T-cell (primary cell): ENCODE measurements at regions of chr6 and their contacts with region 1.

Region 1: GRCh38 chr6:27893059-27893835 is 18.9 kb downstream of the OR2B2 start:
- DNase-seq: peak; percentile 71 to 93 (median 86)
- ATAC-seq: peak; percentile 72 to 79 (median 76)
- H3K4me3 ChIP-seq: peak overlapping the region; percentile 71 to 76
- H3K4me3 Mint-ChIP-seq: no peak overlapping the region
- H3K27ac ChIP-seq: peak overlapping the region; percentile 89
- H3K27ac Mint-ChIP-seq: no peak overlapping the region
- H3K4me1 ChIP-seq: peaks cover 19 to 40% of the 10 kb centered on the region in 2 experiments
- H3K4me1 Mint-ChIP-seq: peaks cover 28 to 36% (median 29%) of the 10 kb centered on the region in 3 donors
- H3K27me3 ChIP-seq: no peaks in the 10 kb centered on the region
- H3K27me3 Mint-ChIP-seq: no peaks in the 10 kb centered on the region

Region 2: GRCh38 chr6:26342106-26343004 is 1550.9 kb before region 1 on chr6:
- CTCF ChIA-PET with region 1: no interaction called
- POLR2A ChIA-PET with region 1: interaction called in 1 of 2 experiments, 11 read pairs
- DNase-seq: peak in 1 of 35 experiments; percentile 27
- ATAC-seq: peak; percentile 14 to 43 (median 28)
- H3K4me3 ChIP-seq: peak overlapping the region in 1 of 2 donors; percentile 33
- H3K4me3 Mint-ChIP-seq: peak overlapping the region; percentile 72 to 82 (median 77)
- H3K27ac ChIP-seq: no peak overlapping the region
- H3K27ac Mint-ChIP-seq: peak overlapping the region in 1 of 2 donors; percentile 59
- H3K4me1 ChIP-seq: peaks cover 0 to 14% of the 10 kb centered on the region in 2 experiments
- H3K4me1 Mint-ChIP-seq: peaks cover 4 to 11% (median 8%) of the 10 kb centered on the region in 3 donors
- H3K27me3 ChIP-seq: no peaks in the 10 kb centered on the region
- H3K27me3 Mint-ChIP-seq: peaks cover 0 to 1% of the 10 kb centered on the region in 2 donors

Region 3: GRCh38 chr6:27146706-27147505 is 746.3 kb before region 1 on chr6:
- CTCF ChIA-PET with region 1: interaction called, 3 to 9 read pairs
- POLR2A ChIA-PET with region 1: interaction called, 16 to 44 read pairs
- DNase-seq: peak; percentile 43 to 96 (median 69)
- ATAC-seq: peak; percentile 85 to 88 (median 86)
- H3K4me3 ChIP-seq: peak overlapping the region; percentile 77 to 93
- H3K4me3 Mint-ChIP-seq: no peak overlapping the region
- H3K27ac ChIP-seq: peak overlapping the region; percentile 91
- H3K27ac Mint-ChIP-seq: no peak overlapping the region
- H3K4me1 ChIP-seq: peaks cover 11 to 29% of the 10 kb centered on the region in 2 experiments
- H3K4me1 Mint-ChIP-seq: peaks cover 13 to 20% (median 18%) of the 10 kb centered on the region in 3 donors
- H3K27me3 ChIP-seq: no peaks in the 10 kb centered on the region
- H3K27me3 Mint-ChIP-seq: no peaks in the 10 kb centered on the region

Region 4: DNA sequence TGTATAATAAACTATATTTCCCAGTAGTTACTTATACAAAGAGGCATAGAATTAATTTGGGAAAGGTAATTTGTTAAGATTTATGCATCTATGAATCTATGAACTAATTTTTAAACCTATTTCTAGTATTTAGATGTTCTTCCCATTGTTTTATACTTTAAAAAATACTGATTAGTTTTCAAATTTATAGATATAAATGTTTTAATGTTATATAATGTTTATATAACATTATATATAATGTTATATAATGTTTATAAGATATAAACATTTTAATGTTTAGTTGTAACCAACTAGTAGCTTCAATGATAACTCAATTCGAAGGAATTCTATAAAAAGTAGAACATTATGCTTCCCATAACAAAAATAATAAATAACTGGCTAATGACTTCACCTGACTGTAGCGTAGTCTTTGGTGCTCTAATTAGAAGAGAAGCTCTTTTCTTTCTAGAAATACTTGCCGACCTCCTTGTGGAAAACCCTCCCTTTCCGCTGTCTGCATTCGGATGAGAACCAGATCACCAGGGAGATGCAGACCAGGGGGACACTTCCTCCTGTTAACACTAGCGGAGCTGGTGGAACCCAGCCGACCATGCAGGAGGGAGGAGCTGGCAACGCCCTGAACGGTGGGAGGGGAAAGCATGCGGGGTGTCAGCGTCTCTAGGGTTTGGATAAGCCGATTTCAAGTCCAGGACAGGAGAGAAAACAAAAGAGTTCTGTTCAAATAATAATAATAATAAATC is 139.4 kb before region 1 on chr6:
- CTCF ChIA-PET with region 1: interaction called, 3 to 24 read pairs
- POLR2A ChIA-PET with region 1: interaction called in 1 of 2 experiments, 6 read pairs
- DNase-seq: peak in 34 of 35 experiments; percentile 16 to 69 (median 46)
- ATAC-seq: peak in 1 of 4 experiments; percentile 27
- H3K4me3 ChIP-seq: peak overlapping the region; percentile 52 to 92
- H3K4me3 Mint-ChIP-seq: peak overlapping the region; percentile 82 to 98 (median 89)
- H3K27ac ChIP-seq: no peak overlapping the region
- H3K27ac Mint-ChIP-seq: peak overlapping the region; percentile 9 to 71
- H3K4me1 ChIP-seq: peaks cover 8 to 23% of the 10 kb centered on the region in 2 experiments
- H3K4me1 Mint-ChIP-seq: peaks cover 30 to 42% (median 37%) of the 10 kb centered on the region in 3 donors
- H3K27me3 ChIP-seq: peaks cover 0 to 13% of the 10 kb centered on the region in 2 experiments
- H3K27me3 Mint-ChIP-seq: peaks cover 0 to 7% of the 10 kb centered on the region in 2 donors

Region 5: DNA sequence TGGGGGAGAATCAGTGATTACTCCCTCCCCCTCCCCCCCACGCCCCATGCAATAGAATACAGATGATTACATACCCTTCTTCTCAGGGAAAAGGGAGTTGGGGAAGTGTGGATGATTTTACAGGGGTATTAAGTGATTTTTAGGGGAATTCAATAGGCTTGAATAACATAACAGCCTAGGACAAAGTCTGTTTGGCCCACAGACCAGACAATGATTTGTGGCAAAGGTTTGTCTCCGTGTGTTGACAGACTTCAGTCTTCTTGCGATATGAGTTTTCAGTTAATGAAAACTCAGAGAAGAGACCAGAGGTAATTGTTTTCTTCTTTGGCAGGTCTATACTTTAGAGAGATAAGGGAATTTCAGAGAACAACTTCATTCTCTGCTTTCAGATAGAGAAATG is 76.3 kb before region 1 on chr6:
- CTCF ChIA-PET with region 1: interaction called, 4 to 81 read pairs
- POLR2A ChIA-PET with region 1: interaction called, 59 to 223 read pairs
- DNase-seq: no peak
- ATAC-seq: no peak
- H3K4me3 ChIP-seq: no peak overlapping the region
- H3K4me3 Mint-ChIP-seq: no peak overlapping the region
- H3K27ac ChIP-seq: no peak overlapping the region
- H3K27ac Mint-ChIP-seq: no peak overlapping the region
- H3K4me1 ChIP-seq: peaks cover 4 to 17% of the 10 kb centered on the region in 2 experiments
- H3K4me1 Mint-ChIP-seq: peaks cover 6 to 19% (median 16%) of the 10 kb centered on the region in 3 donors
- H3K27me3 ChIP-seq: no peaks in the 10 kb centered on the region
- H3K27me3 Mint-ChIP-seq: no peaks in the 10 kb centered on the region

Region 6: DNA sequence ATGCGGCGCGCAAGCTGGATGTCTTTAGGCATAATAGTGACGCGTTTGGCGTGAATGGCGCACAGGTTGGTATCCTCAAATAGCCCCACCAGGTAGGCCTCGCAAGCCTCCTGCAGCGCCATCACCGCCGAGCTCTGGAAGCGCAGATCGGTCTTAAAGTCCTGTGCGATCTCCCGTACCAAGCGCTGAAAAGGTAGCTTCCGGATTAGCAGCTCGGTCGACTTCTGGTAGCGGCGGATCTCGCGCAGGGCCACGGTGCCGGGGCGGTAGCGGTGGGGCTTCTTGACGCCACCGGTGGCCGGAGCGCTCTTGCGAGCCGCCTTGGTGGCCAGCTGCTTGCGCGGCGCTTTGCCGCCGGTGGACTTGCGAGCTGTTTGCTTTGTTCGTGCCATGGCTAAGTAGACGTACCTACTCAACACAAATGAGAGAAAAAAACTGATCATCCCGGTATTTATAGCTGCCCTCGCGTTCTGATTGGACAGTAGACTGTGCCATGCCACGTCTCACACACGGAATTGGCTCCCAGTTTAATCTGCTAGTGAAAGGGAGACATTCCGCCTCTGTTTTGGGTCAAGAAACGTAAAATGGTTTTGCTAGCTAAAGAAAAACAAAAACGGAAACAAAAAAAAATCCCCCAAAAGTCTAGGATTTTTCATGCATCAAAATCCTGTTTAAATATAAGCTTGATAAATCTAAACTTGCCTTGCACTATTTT is 21.2 kb before region 1 on chr6:
- CTCF ChIA-PET with region 1: interaction called, 4 to 134 read pairs
- POLR2A ChIA-PET with region 1: interaction called, 62 to 446 read pairs
- DNase-seq: peak; percentile 70 to 96 (median 84)
- ATAC-seq: peak; percentile 79 to 82 (median 80)
- H3K4me3 ChIP-seq: peak overlapping the region; percentile 65 to 80
- H3K4me3 Mint-ChIP-seq: peak overlapping the region; percentile 83 to 87 (median 84)
- H3K27ac ChIP-seq: peak overlapping the region; percentile 92
- H3K27ac Mint-ChIP-seq: peak overlapping the region; percentile 93 to 96
- H3K4me1 ChIP-seq: peaks cover 16 to 34% of the 10 kb centered on the region in 2 experiments
- H3K4me1 Mint-ChIP-seq: peaks cover 38 to 47% (median 42%) of the 10 kb centered on the region in 3 donors
- H3K27me3 ChIP-seq: no peaks in the 10 kb centered on the region
- H3K27me3 Mint-ChIP-seq: no peaks in the 10 kb centered on the region

Region 7: DNA sequence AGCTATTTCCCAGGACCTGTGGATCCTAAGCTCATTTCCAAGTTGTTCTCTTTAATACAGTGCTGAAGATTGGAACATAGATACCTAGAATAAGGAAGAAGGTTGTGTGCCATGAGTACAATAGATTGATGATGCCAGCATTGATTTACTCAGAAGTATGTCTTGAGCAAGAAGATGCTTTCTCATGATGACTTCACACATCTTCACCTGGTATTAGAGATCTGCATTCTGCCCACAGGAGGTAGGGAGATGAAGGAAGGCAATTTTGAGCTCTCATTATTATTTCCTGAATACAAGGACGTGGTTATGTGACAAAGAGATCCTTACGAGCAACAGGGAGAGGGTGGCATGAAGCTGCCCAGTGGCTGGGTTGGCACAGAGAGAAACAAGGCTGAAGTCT is 167.2 kb after region 1 on chr6:
- CTCF ChIA-PET with region 1: no interaction called
- POLR2A ChIA-PET with region 1: no interaction called
- DNase-seq: no peak
- ATAC-seq: no peak
- H3K4me3 ChIP-seq: no peak overlapping the region
- H3K4me3 Mint-ChIP-seq: no peak overlapping the region
- H3K27ac ChIP-seq: no peak overlapping the region
- H3K27ac Mint-ChIP-seq: no peak overlapping the region
- H3K4me1 ChIP-seq: no peaks in the 10 kb centered on the region
- H3K4me1 Mint-ChIP-seq: no peaks in the 10 kb centered on the region
- H3K27me3 ChIP-seq: peaks cover 2 to 12% of the 10 kb centered on the region in 2 experiments
- H3K27me3 Mint-ChIP-seq: peaks cover 31 to 37% of the 10 kb centered on the region in 2 donors